GM10248 (cell line): ENCODE measurements at regions of chr7 and their contacts with region 1.

Region 1: GRCh38 chr7:27080844-27081436 is 14.9 kb downstream of the HOXA1 start:
- DNase-seq: no peak
- CTCF ChIP-seq: no peak

Region 2: DNA sequence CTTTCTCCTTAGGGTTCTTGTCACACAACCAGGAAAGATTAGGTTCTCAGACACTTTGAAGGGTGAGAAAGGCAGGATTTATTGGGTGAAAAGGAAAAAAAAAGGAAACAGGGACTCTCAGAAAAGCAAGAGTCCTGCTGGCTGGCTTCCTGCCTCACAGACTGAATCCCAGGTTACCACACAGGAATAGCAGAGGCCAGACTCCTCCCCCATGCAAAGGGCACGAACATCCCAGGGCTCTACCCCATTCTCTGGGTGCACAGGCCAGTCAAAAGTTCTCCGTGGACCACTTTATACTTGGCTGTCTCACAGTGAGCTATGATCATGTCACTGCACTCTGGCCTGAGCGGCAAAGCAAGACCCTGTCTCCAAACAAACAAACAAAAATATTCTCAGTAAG is 27.8 kb before region 1 on chr7:
- CTCF ChIA-PET with region 1: no interaction called
- POLR2A ChIA-PET with region 1: no interaction called
- DNase-seq: no peak
- CTCF ChIP-seq: no peak

Region 3: DNA sequence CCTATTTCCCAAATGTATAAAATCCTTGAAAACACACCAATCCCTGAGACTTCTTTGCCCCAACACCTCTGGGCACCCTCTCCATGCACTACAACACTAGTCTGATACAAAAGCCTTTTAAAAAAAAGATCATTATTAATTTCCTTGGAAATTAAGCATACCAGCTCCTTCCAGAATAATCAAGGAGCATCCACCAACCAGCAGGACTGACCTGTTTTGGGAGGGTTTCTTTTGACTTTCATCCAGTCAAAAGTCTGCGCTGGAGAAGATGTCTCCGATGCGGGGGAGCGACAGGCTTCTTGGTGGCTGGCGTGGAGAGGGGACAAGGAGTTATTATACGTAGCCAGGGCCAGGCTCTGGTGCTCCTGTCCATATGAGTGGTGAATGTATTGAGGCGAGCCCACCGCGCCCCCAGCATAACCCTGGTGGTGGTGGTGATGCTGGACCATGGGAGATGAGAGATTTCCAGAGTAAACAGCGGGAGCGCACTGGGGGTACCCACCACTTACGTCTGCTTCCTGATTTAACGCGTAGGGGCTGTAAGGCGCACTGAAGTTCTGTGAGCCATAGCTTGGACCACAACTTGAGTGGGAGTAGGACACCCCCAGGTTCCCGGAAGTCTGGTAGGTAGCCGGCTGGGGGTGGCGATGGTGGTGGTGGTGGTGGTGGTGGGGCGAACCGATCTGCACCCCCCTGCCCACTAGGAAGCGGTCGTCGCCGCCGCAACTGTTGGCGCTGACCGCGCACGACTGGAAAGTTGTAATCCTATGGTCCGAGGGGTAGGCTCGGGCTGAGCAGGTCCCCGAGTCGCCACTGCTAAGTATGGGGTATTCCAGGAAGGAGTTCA is 14.3 kb after region 1 on chr7:
- CTCF ChIA-PET with region 1: interaction called, 13 read pairs
- POLR2A ChIA-PET with region 1: no interaction called
- DNase-seq: no peak
- CTCF ChIP-seq: no peak